CD8-positive, alpha-beta T cell (primary cell): ENCODE measurements at regions of chr10 and their contacts with region 1.

Region 1: GRCh38 chr10:7260412-7260900 is 150.4 kb downstream of the SFMBT2 start:
- DNase-seq: peak in 2 of 9 experiments; percentile 67 to 74
- ATAC-seq: no peak
- H3K4me3 ChIP-seq: no peak overlapping the region
- H3K4me3 Mint-ChIP-seq: no peak overlapping the region
- H3K27ac ChIP-seq: no peak overlapping the region
- H3K27ac Mint-ChIP-seq: peak overlapping the region; percentile 73
- H3K4me1 ChIP-seq: peaks cover 48% of the 10 kb centered on the region
- H3K4me1 Mint-ChIP-seq: peaks cover 52% of the 10 kb centered on the region
- H3K27me3 ChIP-seq: no peaks in the 10 kb centered on the region
- H3K27me3 Mint-ChIP-seq: no peaks in the 10 kb centered on the region
- CTCF ChIP-seq: no peak

Region 2: GRCh38 chr10:7186387-7187018 is 74.0 kb before region 1 on chr10:
- CTCF ChIA-PET with region 1: no interaction called
- POLR2A ChIA-PET with region 1: no interaction called
- intact Hi-C with region 1: loop called in 1 of 2 experiments (anchors 1 kb)
- DNase-seq: peak in 2 of 9 experiments; percentile 9 to 18
- ATAC-seq: no peak
- H3K4me3 ChIP-seq: no peak overlapping the region
- H3K4me3 Mint-ChIP-seq: no peak overlapping the region
- H3K27ac ChIP-seq: no peak overlapping the region
- H3K27ac Mint-ChIP-seq: no peak overlapping the region
- H3K4me1 ChIP-seq: peaks cover 30% of the 10 kb centered on the region
- H3K4me1 Mint-ChIP-seq: peaks cover 37% of the 10 kb centered on the region
- H3K27me3 ChIP-seq: no peaks in the 10 kb centered on the region
- H3K27me3 Mint-ChIP-seq: no peaks in the 10 kb centered on the region
- CTCF ChIP-seq: no peak

Region 3: GRCh38 chr10:7192831-7193361 is 67.6 kb before region 1 on chr10:
- CTCF ChIA-PET with region 1: no interaction called
- POLR2A ChIA-PET with region 1: interaction called, 7 read pairs
- intact Hi-C with region 1: loop called (anchors 2 kb)
- DNase-seq: peak; percentile 28 to 87 (median 68)
- ATAC-seq: peak; percentile 87
- H3K4me3 ChIP-seq: peak overlapping the region; percentile 16 to 36
- H3K4me3 Mint-ChIP-seq: peak overlapping the region; percentile 82
- H3K27ac ChIP-seq: peak overlapping the region; percentile 55 to 64
- H3K27ac Mint-ChIP-seq: peak overlapping the region; percentile 98
- H3K4me1 ChIP-seq: peaks cover 66% of the 10 kb centered on the region
- H3K4me1 Mint-ChIP-seq: peaks cover 67% of the 10 kb centered on the region
- H3K27me3 ChIP-seq: no peaks in the 10 kb centered on the region
- H3K27me3 Mint-ChIP-seq: no peaks in the 10 kb centered on the region
- CTCF ChIP-seq: no peak

Region 4: GRCh38 chr10:7320072-7320471 is 59.6 kb after region 1 on chr10:
- CTCF ChIA-PET with region 1: no interaction called
- POLR2A ChIA-PET with region 1: no interaction called
- intact Hi-C with region 1: no loop called
- DNase-seq: no peak
- ATAC-seq: no peak
- H3K4me3 ChIP-seq: no peak overlapping the region
- H3K4me3 Mint-ChIP-seq: no peak overlapping the region
- H3K27ac ChIP-seq: no peak overlapping the region
- H3K27ac Mint-ChIP-seq: peak overlapping the region; percentile 62
- H3K4me1 ChIP-seq: peaks cover 32% of the 10 kb centered on the region
- H3K4me1 Mint-ChIP-seq: peaks cover 59% of the 10 kb centered on the region
- H3K27me3 ChIP-seq: no peaks in the 10 kb centered on the region
- H3K27me3 Mint-ChIP-seq: no peaks in the 10 kb centered on the region
- CTCF ChIP-seq: no peak

Region 5: DNA sequence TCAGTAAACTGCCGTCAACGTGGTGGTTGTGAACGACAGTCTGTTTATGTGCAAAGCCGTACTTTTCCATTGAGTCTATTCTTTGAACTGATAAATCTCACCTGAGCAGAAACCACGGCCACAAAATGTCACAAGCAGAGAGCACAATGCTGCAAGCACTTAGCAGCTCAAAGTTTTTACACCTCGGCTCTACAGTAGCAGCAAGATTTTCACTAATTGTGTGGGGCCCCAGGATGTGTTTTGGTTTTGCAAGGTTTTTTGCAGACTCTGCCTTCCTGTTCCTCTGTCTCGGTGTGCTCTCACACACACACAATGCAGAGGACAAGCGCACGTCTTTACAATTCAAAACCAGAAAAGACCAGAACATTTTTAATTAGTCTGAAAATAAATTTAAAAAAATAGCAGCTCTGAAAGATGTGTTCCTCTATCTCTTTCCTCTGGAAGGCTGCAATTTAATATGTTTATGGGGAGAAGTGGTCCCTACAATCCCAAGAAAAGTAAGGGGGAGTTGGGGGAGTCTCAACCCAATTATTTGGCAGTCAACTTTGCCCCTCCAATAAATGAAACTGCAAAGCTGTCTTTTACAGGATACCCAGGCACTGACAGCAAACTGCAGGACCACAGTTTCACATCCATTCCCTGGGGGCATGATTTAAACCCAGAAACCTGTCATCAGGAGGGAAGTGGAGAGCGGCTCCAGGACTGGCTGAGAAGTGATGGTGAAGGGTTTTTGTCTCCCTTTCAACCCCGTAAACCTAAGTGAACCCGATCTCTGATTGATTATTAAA is 224.2 kb after region 1 on chr10:
- CTCF ChIA-PET with region 1: no interaction called
- POLR2A ChIA-PET with region 1: interaction called, 4 read pairs
- intact Hi-C with region 1: loop called in 1 of 2 experiments (anchors 2 kb)
- DNase-seq: peak; percentile 39 to 92 (median 66)
- ATAC-seq: peak; percentile 79
- H3K4me3 ChIP-seq: peak overlapping the region; percentile 16 to 40
- H3K4me3 Mint-ChIP-seq: peak overlapping the region; percentile 69
- H3K27ac ChIP-seq: peak overlapping the region; percentile 67 to 83
- H3K27ac Mint-ChIP-seq: peak overlapping the region; percentile 94
- H3K4me1 ChIP-seq: peaks cover 80% of the 10 kb centered on the region
- H3K4me1 Mint-ChIP-seq: peaks cover 89% of the 10 kb centered on the region
- H3K27me3 ChIP-seq: no peaks in the 10 kb centered on the region
- H3K27me3 Mint-ChIP-seq: no peaks in the 10 kb centered on the region
- CTCF ChIP-seq: no peak